B cell (primary cell): ENCODE measurements at regions of chr1 and their contacts with region 1.

Region 1: GRCh38 chr1:58783993-58784757 is at the start of gene JUN:
- DNase-seq: peak; percentile 100
- ATAC-seq: peak; percentile 71
- H3K4me3 ChIP-seq: peak within 1 kb of the TSS; percentile 65 to 99 (median 98)
- H3K4me3 Mint-ChIP-seq: peak within 1 kb of the TSS; percentile 90
- H3K27ac ChIP-seq: peak within 1 kb of the TSS; percentile 100
- H3K27ac Mint-ChIP-seq: peak within 1 kb of the TSS; percentile 97
- H3K4me1 ChIP-seq: peaks cover 16 to 27% of the 10 kb centered on the region in 2 donors
- H3K4me1 Mint-ChIP-seq: peaks cover 39% of the 10 kb centered on the region
- H3K27me3 ChIP-seq: no peaks in the 10 kb centered on the region
- H3K27me3 Mint-ChIP-seq: no peaks in the 10 kb centered on the region
- CTCF ChIP-seq: no peak
- total RNA-seq, gene JUN: 94.4 and 95.3 TPM in 2 replicates

Region 2: DNA sequence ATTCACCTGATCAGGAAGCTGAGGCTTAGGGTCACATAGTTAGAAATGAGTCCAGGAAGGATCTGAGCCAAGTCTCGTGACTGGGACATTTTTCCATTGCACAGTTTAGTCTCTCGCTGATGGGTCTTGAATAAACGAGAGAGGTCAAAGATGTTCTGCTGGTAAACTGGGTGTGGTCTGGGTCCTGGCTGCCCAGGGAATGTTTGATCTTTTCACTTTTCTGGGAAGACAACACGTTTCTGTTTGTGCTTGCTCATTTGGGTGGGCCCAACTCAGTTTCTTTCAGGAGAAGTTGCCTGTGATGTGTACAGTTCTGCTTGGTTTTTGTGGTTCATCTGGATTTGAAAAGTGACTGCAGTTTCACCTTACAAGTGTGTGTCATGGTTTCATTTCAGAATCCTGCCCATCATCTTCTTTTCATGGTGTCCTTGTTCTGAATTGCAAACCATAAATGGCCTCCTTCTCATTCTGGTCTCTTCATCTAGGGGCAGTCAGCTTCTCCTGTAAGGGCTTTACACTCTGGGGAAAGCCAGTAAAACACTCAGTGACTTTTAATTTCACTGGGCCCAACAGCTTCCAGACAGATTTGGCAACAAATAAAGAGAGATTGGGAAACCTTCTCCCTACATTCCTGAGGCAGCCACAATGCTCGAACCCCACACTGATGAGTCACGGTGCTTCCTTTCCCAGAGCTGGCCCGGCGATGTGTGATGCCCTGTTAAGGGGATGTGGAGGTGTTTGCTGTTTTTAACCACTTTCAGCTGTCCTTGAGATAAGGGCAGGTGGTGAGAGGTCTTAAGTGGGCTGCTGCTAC is 199.9 kb before region 1 on chr1:
- CTCF ChIA-PET with region 1: no interaction called
- POLR2A ChIA-PET with region 1: no interaction called
- intact Hi-C with region 1: no loop called
- DNase-seq: no peak
- ATAC-seq: no peak
- H3K4me3 ChIP-seq: no peak overlapping the region
- H3K4me3 Mint-ChIP-seq: no peak overlapping the region
- H3K27ac ChIP-seq: no peak overlapping the region
- H3K27ac Mint-ChIP-seq: no peak overlapping the region
- H3K4me1 ChIP-seq: no peaks in the 10 kb centered on the region
- H3K4me1 Mint-ChIP-seq: peaks cover 7% of the 10 kb centered on the region
- H3K27me3 ChIP-seq: peaks cover 0 to 14% (median 7%) of the 10 kb centered on the region in 4 experiments
- H3K27me3 Mint-ChIP-seq: peaks cover 39% of the 10 kb centered on the region
- CTCF ChIP-seq: no peak

Region 3: GRCh38 chr1:58739856-58740466 is 44.2 kb before region 1 on chr1:
- CTCF ChIA-PET with region 1: interaction called, 5 read pairs
- POLR2A ChIA-PET with region 1: no interaction called
- intact Hi-C with region 1: loop called (anchors 2 kb)
- DNase-seq: peak; percentile 75
- ATAC-seq: peak; percentile 61
- H3K4me3 ChIP-seq: no peak overlapping the region
- H3K4me3 Mint-ChIP-seq: no peak overlapping the region
- H3K27ac ChIP-seq: no peak overlapping the region
- H3K27ac Mint-ChIP-seq: no peak overlapping the region
- H3K4me1 ChIP-seq: no peaks in the 10 kb centered on the region
- H3K4me1 Mint-ChIP-seq: no peaks in the 10 kb centered on the region
- H3K27me3 ChIP-seq: no peaks in the 10 kb centered on the region
- H3K27me3 Mint-ChIP-seq: peaks cover 12% of the 10 kb centered on the region
- CTCF ChIP-seq: peak; percentile 98

Region 4: DNA sequence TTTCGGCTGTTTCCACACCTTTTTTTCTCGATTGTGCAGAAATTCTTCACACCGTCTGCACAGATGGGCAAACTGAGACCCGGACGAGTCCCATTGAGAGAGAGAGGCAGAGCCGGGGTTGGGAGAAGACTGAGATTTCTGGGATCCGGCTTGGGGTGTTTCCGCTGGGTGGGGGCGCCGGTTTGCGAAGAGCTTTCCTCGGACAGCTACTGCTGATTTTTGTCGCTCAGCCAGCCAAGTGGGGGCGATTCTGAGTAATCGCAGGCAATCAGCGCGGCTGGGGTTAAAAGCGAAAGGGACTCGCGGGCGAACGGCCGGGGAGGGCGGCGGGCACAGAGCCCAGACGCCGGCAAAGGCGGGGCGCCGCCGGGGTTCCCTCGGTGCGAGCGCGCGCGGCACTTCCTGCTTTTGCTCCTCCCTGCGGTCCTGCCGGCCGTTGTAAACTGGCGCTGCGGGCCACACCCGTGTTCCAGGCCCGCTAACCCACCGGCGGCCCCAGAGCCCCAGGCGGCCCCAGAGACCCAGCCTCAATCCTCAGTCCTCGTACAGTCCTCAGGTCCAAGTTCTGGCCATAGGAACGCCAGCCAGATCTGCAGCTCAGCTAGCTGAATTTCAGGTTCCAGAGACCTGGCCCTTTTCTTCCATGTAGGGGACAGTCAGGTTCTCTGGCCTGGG is 32.0 kb after region 1 on chr1:
- CTCF ChIA-PET with region 1: interaction called, 10 read pairs
- POLR2A ChIA-PET with region 1: interaction called, 36 read pairs
- intact Hi-C with region 1: loop called (anchors 1 kb)
- DNase-seq: peak; percentile 88
- ATAC-seq: peak; percentile 88
- H3K4me3 ChIP-seq: peak overlapping the region; percentile 84 to 98 (median 88)
- H3K4me3 Mint-ChIP-seq: peak overlapping the region; percentile 95
- H3K27ac ChIP-seq: peak overlapping the region; percentile 88 to 91
- H3K27ac Mint-ChIP-seq: peak overlapping the region; percentile 96
- H3K4me1 ChIP-seq: peaks cover 29 to 45% of the 10 kb centered on the region in 2 donors
- H3K4me1 Mint-ChIP-seq: peaks cover 51% of the 10 kb centered on the region
- H3K27me3 ChIP-seq: no peaks in the 10 kb centered on the region
- H3K27me3 Mint-ChIP-seq: no peaks in the 10 kb centered on the region
- CTCF ChIP-seq: no peak

Region 5: DNA sequence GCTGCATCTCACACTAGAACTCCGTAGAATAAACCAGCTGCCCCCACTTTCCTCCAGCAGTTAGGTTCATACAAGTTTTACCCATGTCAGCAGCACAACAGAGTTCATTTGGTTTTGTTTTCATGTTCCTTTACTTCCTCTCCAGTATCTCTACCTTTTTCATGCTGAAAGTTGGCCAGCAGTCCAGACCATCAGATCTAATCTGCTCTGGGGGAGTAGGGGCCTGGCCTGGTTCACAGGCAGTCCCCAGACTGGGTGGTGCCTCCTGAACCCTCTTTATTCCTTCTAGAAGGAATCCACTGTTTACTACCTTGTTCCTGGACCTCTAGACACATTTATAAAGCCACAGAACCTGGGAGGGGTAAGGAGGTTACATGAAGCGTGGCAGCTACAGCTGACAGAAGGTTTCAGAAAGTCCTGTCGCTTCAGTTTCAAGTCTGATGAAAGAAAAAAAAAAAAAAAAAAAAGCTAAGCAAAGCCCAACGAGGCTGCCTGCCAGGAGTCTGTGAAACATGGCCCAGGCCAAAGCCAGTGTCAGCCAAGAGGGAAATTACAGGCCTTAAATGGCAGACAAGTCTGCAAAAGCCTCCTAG is 184.3 kb after region 1 on chr1:
- CTCF ChIA-PET with region 1: interaction called, 7 read pairs
- POLR2A ChIA-PET with region 1: interaction called, 9 read pairs
- intact Hi-C with region 1: loop called (anchors 1 kb)
- DNase-seq: peak; percentile 86
- ATAC-seq: peak; percentile 90
- H3K4me3 ChIP-seq: peak overlapping the region in 3 of 5 experiments; percentile 29 to 59 (median 31)
- H3K4me3 Mint-ChIP-seq: peak overlapping the region; percentile 85
- H3K27ac ChIP-seq: peak overlapping the region; percentile 81 to 90
- H3K27ac Mint-ChIP-seq: peak overlapping the region; percentile 100
- H3K4me1 ChIP-seq: peaks cover 54 to 58% of the 10 kb centered on the region in 2 donors
- H3K4me1 Mint-ChIP-seq: peaks cover 70% of the 10 kb centered on the region
- H3K27me3 ChIP-seq: no peaks in the 10 kb centered on the region
- H3K27me3 Mint-ChIP-seq: no peaks in the 10 kb centered on the region
- CTCF ChIP-seq: no peak

Region 6: DNA sequence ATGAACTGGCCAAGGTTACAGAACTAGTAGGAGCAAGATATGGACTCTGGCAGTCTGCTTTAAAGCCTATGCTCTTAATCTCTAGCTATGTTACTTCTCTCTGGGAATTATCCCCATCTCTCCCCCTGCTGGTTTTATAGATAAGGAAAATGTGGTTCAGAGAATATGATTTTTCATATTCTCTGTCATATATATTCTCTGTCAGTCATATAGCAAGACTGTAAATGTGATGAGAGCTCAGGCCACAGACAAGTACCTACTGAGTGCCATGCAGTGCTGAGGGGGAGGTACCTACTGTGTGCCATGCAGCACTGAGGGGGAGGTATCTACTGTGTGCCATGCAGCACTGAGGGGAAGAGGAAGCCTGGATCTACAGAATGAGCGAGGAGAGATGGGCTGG is 292.4 kb after region 1 on chr1:
- CTCF ChIA-PET with region 1: interaction called, 3 read pairs
- POLR2A ChIA-PET with region 1: no interaction called
- intact Hi-C with region 1: loop called (anchors 2 kb)
- DNase-seq: no peak
- ATAC-seq: peak; percentile 21
- H3K4me3 ChIP-seq: no peak overlapping the region
- H3K4me3 Mint-ChIP-seq: no peak overlapping the region
- H3K27ac ChIP-seq: no peak overlapping the region
- H3K27ac Mint-ChIP-seq: no peak overlapping the region
- H3K4me1 ChIP-seq: peaks cover 12 to 16% of the 10 kb centered on the region in 2 donors
- H3K4me1 Mint-ChIP-seq: peaks cover 23% of the 10 kb centered on the region
- H3K27me3 ChIP-seq: no peaks in the 10 kb centered on the region
- H3K27me3 Mint-ChIP-seq: no peaks in the 10 kb centered on the region
- CTCF ChIP-seq: no peak

Region 7: GRCh38 chr1:59266180-59266926 is 482.2 kb after region 1 on chr1:
- CTCF ChIA-PET with region 1: no interaction called
- POLR2A ChIA-PET with region 1: interaction called, 9 read pairs
- intact Hi-C with region 1: loop called (anchors 1 kb)
- DNase-seq: peak; percentile 85
- ATAC-seq: peak; percentile 96
- H3K4me3 ChIP-seq: peak overlapping the region in 1 of 5 experiments; percentile 24
- H3K4me3 Mint-ChIP-seq: peak overlapping the region; percentile 35
- H3K27ac ChIP-seq: peak overlapping the region; percentile 48 to 76
- H3K27ac Mint-ChIP-seq: peak overlapping the region; percentile 95
- H3K4me1 ChIP-seq: peaks cover 22 to 34% of the 10 kb centered on the region in 2 donors
- H3K4me1 Mint-ChIP-seq: peaks cover 39% of the 10 kb centered on the region
- H3K27me3 ChIP-seq: no peaks in the 10 kb centered on the region
- H3K27me3 Mint-ChIP-seq: no peaks in the 10 kb centered on the region
- CTCF ChIP-seq: no peak